Vagina (tissue), 2 donors: ENCODE measurements at regions of chr6 and their contacts with region 1.

Region 1: GRCh38 chr6:160030103-160030502 is 61.2 kb downstream of the IGF2R start:
- DNase-seq: peak in 1 of 2 donors; percentile 89
- H3K4me3 ChIP-seq: no peak overlapping the region
- H3K27ac ChIP-seq: peak overlapping the region; percentile 71
- H3K4me1 ChIP-seq: peaks cover 22% of the 10 kb centered on the region
- H3K27me3 ChIP-seq: no peaks in the 10 kb centered on the region
- CTCF ChIP-seq: no peak
- POLR2A ChIP-seq: no peak

Region 2: DNA sequence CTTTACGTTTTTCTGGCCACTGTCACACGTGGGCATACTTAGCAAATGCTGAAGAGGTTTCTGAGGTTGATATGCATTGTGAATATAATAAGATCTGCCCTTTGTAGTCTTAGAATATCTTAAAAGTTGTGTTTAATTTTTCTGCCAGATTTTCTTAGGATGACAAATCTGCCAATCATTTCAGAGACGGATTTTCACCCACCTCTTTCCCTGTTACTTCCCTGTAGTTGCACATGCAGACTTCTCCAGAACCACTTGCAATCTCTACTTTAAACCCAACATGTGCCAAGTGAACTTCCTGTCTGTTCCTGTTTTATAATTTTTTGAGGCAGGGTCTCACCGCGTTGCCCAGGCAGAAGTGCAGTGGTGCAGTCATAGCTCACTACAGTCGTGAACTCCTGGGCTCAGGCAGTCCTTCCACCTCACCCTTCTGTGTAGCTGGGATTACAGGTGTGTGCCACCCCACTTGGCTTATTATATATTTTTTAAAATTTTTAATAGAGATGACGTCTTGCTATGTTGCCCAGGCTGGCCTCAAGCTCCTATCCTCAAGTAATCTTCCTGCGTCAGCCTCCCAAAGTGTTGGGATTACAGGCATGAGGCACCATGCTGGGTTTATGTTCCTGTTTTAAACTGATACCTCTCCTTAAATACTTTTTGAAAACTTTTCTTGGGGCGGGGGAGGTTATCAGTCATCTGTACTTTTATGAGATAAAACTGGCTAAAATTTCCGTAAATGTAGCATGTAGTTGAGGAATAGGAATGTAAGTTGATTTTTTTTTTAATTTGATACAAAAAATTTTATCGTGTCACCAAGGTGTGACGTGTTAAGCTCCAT is 58.5 kb before region 1 on chr6:
- intact Hi-C with region 1: no loop called
- DNase-seq: no peak
- H3K4me3 ChIP-seq: no peak overlapping the region
- H3K27ac ChIP-seq: peak overlapping the region; percentile 93
- H3K4me1 ChIP-seq: peaks cover 65% of the 10 kb centered on the region
- H3K27me3 ChIP-seq: no peaks in the 10 kb centered on the region
- CTCF ChIP-seq: no peak
- POLR2A ChIP-seq: no peak

Region 3: DNA sequence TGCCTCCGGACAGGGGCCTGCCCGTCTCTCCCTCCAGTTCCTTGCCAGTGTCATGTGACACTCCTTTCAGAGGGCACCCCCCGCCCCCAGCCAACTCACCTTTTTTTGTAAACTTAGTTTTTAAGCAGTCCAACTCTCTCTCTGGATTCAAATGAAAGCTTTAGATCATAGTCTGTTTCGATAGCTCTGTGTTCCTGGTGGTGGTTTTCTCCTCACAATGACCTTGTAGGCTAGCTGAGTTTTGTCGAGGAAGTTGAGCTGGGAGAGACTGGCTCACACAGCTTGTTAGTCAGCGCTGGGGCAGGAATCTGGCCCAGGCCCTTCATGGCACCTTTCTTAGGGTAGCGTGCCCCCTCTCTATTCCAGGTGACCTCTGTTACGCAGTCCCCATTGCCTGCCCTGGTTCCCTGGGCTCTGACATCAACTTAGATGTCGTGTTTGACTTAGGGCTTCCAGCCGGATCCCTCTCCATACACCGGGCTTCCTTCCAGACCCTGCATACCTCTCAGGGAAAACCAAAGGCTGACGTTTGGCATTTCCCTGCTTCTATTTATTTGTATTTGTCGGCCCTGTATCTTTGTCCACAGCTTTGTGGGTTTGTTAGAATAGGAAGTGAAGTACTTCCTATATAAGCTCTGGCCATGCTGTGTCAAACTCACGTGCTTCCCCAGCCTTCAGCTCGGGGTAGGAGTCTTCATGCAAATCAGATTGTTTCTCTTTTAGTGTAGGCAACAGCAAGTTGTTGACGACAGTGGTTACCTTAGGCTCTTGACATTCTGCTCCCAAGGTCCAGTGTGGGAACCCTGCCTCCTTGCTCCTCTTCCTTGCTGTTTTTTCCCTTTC is 48.5 kb before region 1 on chr6:
- intact Hi-C with region 1: loop called (anchors 10 kb)
- DNase-seq: no peak
- H3K4me3 ChIP-seq: peak overlapping the region; percentile 3 to 10
- H3K27ac ChIP-seq: peak overlapping the region; percentile 67
- H3K4me1 ChIP-seq: peaks cover 94% of the 10 kb centered on the region
- H3K27me3 ChIP-seq: no peaks in the 10 kb centered on the region
- CTCF ChIP-seq: no peak
- POLR2A ChIP-seq: no peak

Region 4: GRCh38 chr6:160069050-160069454 is 38.9 kb after region 1 on chr6:
- intact Hi-C with region 1: no loop called
- DNase-seq: no peak
- H3K4me3 ChIP-seq: no peak overlapping the region
- H3K27ac ChIP-seq: no peak overlapping the region
- H3K4me1 ChIP-seq: no peaks in the 10 kb centered on the region
- H3K27me3 ChIP-seq: no peaks in the 10 kb centered on the region
- CTCF ChIP-seq: no peak
- POLR2A ChIP-seq: no peak